Adrenal gland (tissue), 19 donors: ENCODE measurements at regions of chr16 and their contacts with region 1.

Region 1: GRCh38 chr16:89507834-89508590 is at the start of gene SPG7:
- DNase-seq: peak; percentile 69 to 90 (median 83)
- H3K4me3 ChIP-seq: peak within 1 kb of the TSS; percentile 89 to 94 (median 90)
- H3K27ac ChIP-seq: peak within 1 kb of the TSS; percentile 84 to 96 (median 94)
- H3K4me1 ChIP-seq: peaks cover 20 to 40% of the 10 kb centered on the region in 2 donors
- H3K27me3 ChIP-seq: no peaks in the 10 kb centered on the region
- CTCF ChIP-seq: peak in 1 of 6 experiments; percentile 21
- POLR2A ChIP-seq: peak; percentile 88 to 90
- total RNA-seq, gene SPG7: 91.0 to 246 (median 138) TPM

Region 2: GRCh38 chr16:89241187-89242007 is 266.6 kb before region 1 on chr16:
- intact Hi-C with region 1: loop called in 1 of 2 experiments (anchors 10 kb)
- DNase-seq: peak; percentile 71 to 86 (median 77)
- H3K4me3 ChIP-seq: peak overlapping the region; percentile 37 to 65 (median 62)
- H3K27ac ChIP-seq: peak overlapping the region; percentile 93 to 98 (median 96)
- H3K4me1 ChIP-seq: peaks cover 4 to 5% of the 10 kb centered on the region in 2 donors
- H3K27me3 ChIP-seq: no peaks in the 10 kb centered on the region
- CTCF ChIP-seq: no peak
- POLR2A ChIP-seq: peak; percentile 88 to 93

Region 3: DNA sequence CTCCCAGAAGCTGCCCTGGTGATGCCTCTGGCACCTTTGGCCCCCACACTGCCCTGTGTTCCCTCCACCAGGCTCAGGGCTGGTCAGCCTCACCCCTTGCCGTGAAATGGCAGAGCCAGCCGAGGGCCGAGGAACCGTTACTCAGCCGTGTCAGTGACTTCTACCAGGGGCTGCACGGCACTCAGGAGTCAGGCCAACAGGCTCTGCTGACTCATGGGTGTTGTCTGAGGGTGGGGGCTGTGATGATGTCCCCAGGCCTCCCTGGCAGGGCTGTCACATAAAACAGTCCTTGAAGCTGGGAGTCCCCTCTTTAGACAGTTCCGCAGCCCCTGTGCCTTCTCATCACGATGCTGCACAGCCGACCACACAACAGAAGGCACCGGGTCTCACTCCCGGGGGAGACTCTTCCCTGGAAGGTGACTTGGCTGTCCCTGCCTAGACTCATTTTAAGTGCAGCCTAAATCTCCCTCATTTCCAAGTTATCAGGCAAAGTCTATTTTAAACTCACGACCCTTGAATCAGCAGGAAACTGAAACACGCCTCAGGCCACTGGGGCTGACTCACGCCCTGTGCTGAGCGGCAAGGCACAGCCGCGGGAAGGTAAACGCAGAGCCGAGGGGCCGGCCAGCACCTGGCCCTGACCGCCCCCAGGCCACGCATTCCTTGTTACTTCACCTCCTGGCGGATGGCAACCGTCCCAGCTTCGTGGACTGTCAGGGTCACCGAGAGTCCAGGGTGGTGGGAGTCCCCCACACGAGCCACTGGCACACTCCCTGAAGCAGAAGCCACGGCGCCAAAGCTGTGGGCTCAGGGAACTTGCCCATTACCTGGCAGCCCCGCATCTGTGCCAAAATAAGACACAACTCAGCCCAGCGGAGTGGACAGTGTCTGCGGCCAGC is 187.9 kb before region 1 on chr16:
- intact Hi-C with region 1: loop called in 1 of 2 experiments (anchors 10 kb)
- DNase-seq: peak; percentile 79 to 93 (median 88)
- H3K4me3 ChIP-seq: peak overlapping the region in 1 of 4 donors; percentile 24
- H3K27ac ChIP-seq: peak overlapping the region; percentile 86 to 97 (median 88)
- H3K4me1 ChIP-seq: peaks cover 49 to 97% of the 10 kb centered on the region in 2 donors
- H3K27me3 ChIP-seq: no peaks in the 10 kb centered on the region
- CTCF ChIP-seq: no peak
- POLR2A ChIP-seq: peak in 1 of 2 donors; percentile 65

Region 4: DNA sequence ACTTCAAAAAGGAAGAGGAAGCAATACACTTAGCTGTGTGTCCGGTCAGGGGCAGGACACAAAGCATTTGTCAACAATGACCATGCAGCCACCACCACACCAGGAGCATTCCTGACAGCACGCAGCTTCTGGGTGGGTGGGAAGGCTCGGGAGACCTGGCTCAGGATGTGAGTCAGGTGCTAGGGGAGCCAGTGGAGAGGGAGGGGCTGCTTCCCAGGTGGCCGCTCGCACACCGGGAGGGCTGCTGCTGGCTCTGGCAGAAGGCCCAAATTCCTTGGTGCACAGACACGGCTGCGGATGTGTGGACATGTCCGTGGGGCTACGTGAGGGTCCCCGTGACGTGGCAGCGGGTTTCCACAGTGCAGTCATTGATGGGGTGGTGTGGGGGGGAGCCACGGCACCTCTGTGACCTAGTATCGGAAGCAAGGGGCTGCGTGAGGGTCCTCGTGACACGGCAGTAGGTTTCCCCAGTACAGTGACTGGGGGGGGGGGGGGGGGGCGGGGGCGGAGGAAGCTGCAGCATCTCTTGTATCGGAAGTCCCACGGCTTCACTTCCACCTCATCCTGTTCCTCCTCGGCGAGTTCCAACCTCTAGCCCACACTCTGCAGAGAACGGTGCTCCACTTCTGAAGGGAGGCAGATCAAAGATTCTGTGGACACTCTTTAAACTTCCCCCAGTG is 177.7 kb before region 1 on chr16:
- intact Hi-C with region 1: loop called (anchors 5 to 10 kb)
- DNase-seq: peak in 3 of 7 donors; percentile 10 to 54 (median 29)
- H3K4me3 ChIP-seq: no peak overlapping the region
- H3K27ac ChIP-seq: peak overlapping the region in 3 of 5 donors; percentile 43 to 80 (median 52)
- H3K4me1 ChIP-seq: peaks cover 28 to 82% of the 10 kb centered on the region in 2 donors
- H3K27me3 ChIP-seq: no peaks in the 10 kb centered on the region
- CTCF ChIP-seq: no peak
- POLR2A ChIP-seq: no peak